ENCODE measurements at regions of chr10 and their contacts with region 1.

Region 1: GRCh38 chr10:132036153-132036886 is 29.4 kb upstream of the JAKMIP3 start:
- DNase-seq: peak; percentile 32 to 35
- H3K4me3 ChIP-seq: peak overlapping the region in 1 of 3 donors; percentile 27
- H3K27ac ChIP-seq: no peak overlapping the region
- H3K4me1 ChIP-seq: peaks cover 5 to 10% of the 10 kb centered on the region in 2 donors
- H3K27me3 ChIP-seq: no peaks in the 10 kb centered on the region
- CTCF ChIP-seq: no peak
- POLR2A ChIP-seq: peak in 1 of 2 donors; percentile 8

Region 2: GRCh38 chr10:131928248-131929095 is 107.8 kb before region 1 on chr10:
- intact Hi-C with region 1: no loop called
- DNase-seq: no peak
- H3K4me3 ChIP-seq: no peak overlapping the region
- H3K27ac ChIP-seq: peak overlapping the region in 1 of 3 donors; percentile 24
- H3K4me1 ChIP-seq: peaks cover 39 to 47% of the 10 kb centered on the region in 2 donors
- H3K27me3 ChIP-seq: no peaks in the 10 kb centered on the region
- CTCF ChIP-seq: no peak
- POLR2A ChIP-seq: no peak

Region 3: GRCh38 chr10:132142411-132143161 is 106.3 kb after region 1 on chr10:
- intact Hi-C with region 1: loop called (anchors 10 kb)
- DNase-seq: peak; percentile 41 to 46
- H3K4me3 ChIP-seq: no peak overlapping the region
- H3K27ac ChIP-seq: no peak overlapping the region
- H3K4me1 ChIP-seq: no peaks in the 10 kb centered on the region
- H3K27me3 ChIP-seq: no peaks in the 10 kb centered on the region
- CTCF ChIP-seq: peak in 5 of 6 experiments; percentile 50 to 91 (median 69)
- POLR2A ChIP-seq: no peak

Measured in thyroid gland (tissue), 4 donors.